Endothelial cell of umbilical vein (primary cell): ENCODE measurements at regions of chr1 and their contacts with region 1.

Region 1: DNA sequence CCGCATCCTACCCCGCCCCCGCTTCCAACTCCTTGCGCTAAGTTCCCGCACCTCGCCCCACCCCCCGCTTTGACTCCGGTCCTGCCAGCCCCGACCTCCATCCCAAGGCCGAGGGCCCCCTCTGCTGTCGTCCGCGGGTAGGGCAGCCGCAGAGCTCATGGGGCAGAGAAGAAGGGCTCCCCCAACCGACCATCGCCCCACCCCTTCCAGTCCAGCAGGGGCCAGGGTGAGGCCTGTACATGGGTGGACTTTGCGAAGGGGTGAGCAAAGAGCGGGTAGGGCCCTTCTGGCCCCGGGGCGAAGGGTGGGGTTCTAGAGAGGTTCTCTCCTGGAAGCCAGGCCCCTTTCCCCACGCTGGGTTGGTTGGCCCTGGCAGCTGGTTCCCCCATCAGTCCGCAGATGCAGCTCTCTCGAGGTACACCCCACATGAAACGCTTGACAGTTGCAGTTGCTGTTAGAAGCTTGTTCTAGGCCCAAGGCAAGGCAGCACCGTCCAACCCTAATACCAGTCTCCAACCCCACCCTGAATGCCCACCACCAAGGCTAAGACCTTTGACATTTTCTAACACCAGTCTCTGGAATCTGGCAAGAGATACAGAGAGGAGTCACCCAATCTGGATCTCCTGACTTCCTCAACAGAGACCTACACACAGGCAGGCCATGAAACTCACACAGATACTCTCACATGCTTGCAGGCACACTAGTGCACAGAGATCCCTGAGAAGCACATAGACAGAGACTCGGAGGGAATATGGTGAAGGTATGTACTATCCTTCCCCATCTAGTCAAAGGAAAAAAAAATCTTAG is 25.3 kb upstream of the ADGRB2 start:
- DNase-seq: peak; percentile 91
- H3K4me3 ChIP-seq: peak overlapping the region; percentile 4 to 78 (median 55)
- H3K27ac ChIP-seq: no peak overlapping the region
- H3K4me1 ChIP-seq: peaks cover 4% of the 10 kb centered on the region
- H3K27me3 ChIP-seq: no peaks in the 10 kb centered on the region
- CTCF ChIP-seq: peak; percentile 70 to 93
- POLR2A ChIP-seq: peak; percentile 32

Region 2: DNA sequence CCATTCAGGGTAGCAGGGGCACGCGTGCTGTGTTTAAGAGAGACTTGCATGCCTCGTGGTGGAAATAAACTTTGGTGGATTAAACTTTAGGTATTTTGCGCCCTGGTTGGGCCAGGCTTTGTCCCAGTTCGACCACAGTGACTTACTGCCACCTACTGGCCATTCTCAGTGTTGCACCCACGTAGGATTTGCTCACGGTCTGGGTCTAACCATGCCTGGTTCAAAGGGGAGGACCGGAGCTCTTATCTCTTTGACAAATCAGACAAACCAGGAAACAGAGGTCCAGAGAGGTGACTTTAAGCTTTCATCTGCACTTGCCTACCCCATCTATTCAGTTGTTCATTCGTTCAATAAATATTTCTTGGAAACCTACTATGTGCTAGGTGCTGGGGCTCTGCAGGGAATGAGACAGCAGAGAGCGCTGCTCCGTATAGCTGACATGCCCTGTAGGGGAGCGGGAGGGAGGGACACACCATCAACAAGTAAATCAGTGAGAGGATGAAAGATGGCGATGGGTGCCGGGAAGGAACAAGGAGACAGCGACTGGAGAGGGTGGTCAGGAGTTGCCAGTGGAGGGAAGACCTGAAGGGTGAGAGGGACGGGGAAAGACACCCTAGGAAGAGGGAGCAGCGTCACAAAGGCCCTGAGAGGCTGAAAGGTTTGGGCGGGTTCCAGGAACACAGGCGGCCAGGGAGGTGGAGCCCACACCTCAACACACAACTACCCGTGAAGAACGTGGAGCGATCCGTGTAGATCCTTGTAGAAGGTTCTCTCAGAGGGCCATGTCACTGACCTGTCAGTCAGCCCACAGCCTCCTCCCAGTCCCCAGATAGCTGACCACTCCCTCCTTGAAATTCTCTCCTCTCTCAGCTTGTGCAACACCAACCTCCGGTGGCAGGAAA is 240.3 kb before region 1 on chr1:
- CTCF ChIA-PET with region 1: interaction called, 20 read pairs
- POLR2A ChIA-PET with region 1: no interaction called
- dilution Hi-C with region 1: no loop called
- intact Hi-C with region 1: loop called (anchors 1 kb)
- DNase-seq: peak; percentile 88
- H3K4me3 ChIP-seq: peak overlapping the region in 1 of 3 experiments; percentile 20
- H3K27ac ChIP-seq: peak overlapping the region; percentile 4
- H3K4me1 ChIP-seq: peaks cover 13% of the 10 kb centered on the region
- H3K27me3 ChIP-seq: no peaks in the 10 kb centered on the region
- CTCF ChIP-seq: peak; percentile 86 to 95
- POLR2A ChIP-seq: no peak

Region 3: GRCh38 chr1:31644560-31645273 is 144.7 kb before region 1 on chr1 and contains the start of gene PEF1:
- CTCF ChIA-PET with region 1: interaction called, 9 read pairs
- POLR2A ChIA-PET with region 1: no interaction called
- dilution Hi-C with region 1: no loop called
- intact Hi-C with region 1: loop called (anchors 1 kb)
- DNase-seq: peak; percentile 98
- H3K4me3 ChIP-seq: peak within 1 kb of the TSS; percentile 53 to 93 (median 68)
- H3K27ac ChIP-seq: peak within 1 kb of the TSS; percentile 90
- H3K4me1 ChIP-seq: peaks cover 22% of the 10 kb centered on the region
- H3K27me3 ChIP-seq: no peaks in the 10 kb centered on the region
- CTCF ChIP-seq: no peak
- POLR2A ChIP-seq: peak; percentile 33
- total RNA-seq, gene PEF1: 66.5 and 73.3 TPM in 2 replicates

Region 4: DNA sequence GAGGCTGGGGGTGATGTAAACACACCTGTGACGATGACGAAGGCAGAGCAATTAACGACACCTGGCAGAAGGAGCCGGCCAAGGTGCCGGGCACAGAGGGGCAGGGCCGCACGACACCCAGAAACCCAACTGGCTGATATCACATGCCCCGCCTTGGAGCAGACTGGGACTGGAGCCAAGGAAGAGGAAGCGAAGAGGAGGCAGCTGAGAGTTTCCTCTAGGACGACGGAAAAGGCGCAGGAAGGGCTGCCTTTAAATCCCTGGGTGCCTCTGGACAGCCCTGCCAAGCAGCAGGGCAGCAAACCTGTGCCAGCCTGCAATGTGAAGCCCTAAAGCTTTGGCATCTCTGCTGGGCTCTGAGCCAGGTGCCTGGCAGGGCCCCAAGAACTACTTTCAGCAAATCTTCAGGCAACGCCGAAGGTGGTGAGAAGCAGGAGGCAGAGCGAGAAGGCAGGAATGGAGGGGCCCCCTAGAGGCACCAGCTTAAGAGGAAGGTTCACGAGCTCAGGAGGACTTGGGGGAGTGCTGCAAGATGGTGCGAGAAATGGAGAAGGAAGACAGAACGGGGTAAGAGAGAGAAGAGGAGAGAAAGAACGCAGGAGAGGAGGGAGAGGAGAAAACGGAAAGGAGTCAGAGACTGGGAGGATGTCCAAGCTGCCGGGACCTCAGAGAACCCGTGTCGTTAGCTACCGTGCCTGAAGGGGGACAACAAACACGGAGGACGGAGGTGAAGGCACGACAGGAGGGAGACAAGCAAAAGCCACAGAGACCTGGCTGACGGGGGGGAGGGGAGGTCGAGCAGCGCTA is 119.5 kb before region 1 on chr1:
- CTCF ChIA-PET with region 1: interaction called, 76 read pairs
- POLR2A ChIA-PET with region 1: no interaction called
- dilution Hi-C with region 1: no loop called
- intact Hi-C with region 1: no loop called
- DNase-seq: peak; percentile 77
- H3K4me3 ChIP-seq: peak overlapping the region; percentile 7 to 31 (median 21)
- H3K27ac ChIP-seq: no peak overlapping the region
- H3K4me1 ChIP-seq: peaks cover 13% of the 10 kb centered on the region
- H3K27me3 ChIP-seq: no peaks in the 10 kb centered on the region
- CTCF ChIP-seq: peak; percentile 10 to 29
- POLR2A ChIP-seq: no peak

Region 5: GRCh38 chr1:31725777-31726535 is 63.5 kb before region 1 on chr1:
- CTCF ChIA-PET with region 1: no interaction called
- POLR2A ChIA-PET with region 1: no interaction called
- dilution Hi-C with region 1: no loop called
- intact Hi-C with region 1: no loop called
- DNase-seq: no peak
- H3K4me3 ChIP-seq: no peak overlapping the region
- H3K27ac ChIP-seq: no peak overlapping the region
- H3K4me1 ChIP-seq: no peaks in the 10 kb centered on the region
- H3K27me3 ChIP-seq: no peaks in the 10 kb centered on the region
- CTCF ChIP-seq: no peak
- POLR2A ChIP-seq: no peak

Region 6: GRCh38 chr1:31745096-31745945 is 44.1 kb before region 1 on chr1:
- CTCF ChIA-PET with region 1: interaction called, 43 read pairs
- POLR2A ChIA-PET with region 1: no interaction called
- dilution Hi-C with region 1: no loop called
- intact Hi-C with region 1: loop called (anchors 1 kb)
- DNase-seq: peak; percentile 55
- H3K4me3 ChIP-seq: no peak overlapping the region
- H3K27ac ChIP-seq: no peak overlapping the region
- H3K4me1 ChIP-seq: no peaks in the 10 kb centered on the region
- H3K27me3 ChIP-seq: peaks cover 0 to 4% of the 10 kb centered on the region in 2 experiments
- CTCF ChIP-seq: peak; percentile 77 to 92
- POLR2A ChIP-seq: no peak

Region 7: DNA sequence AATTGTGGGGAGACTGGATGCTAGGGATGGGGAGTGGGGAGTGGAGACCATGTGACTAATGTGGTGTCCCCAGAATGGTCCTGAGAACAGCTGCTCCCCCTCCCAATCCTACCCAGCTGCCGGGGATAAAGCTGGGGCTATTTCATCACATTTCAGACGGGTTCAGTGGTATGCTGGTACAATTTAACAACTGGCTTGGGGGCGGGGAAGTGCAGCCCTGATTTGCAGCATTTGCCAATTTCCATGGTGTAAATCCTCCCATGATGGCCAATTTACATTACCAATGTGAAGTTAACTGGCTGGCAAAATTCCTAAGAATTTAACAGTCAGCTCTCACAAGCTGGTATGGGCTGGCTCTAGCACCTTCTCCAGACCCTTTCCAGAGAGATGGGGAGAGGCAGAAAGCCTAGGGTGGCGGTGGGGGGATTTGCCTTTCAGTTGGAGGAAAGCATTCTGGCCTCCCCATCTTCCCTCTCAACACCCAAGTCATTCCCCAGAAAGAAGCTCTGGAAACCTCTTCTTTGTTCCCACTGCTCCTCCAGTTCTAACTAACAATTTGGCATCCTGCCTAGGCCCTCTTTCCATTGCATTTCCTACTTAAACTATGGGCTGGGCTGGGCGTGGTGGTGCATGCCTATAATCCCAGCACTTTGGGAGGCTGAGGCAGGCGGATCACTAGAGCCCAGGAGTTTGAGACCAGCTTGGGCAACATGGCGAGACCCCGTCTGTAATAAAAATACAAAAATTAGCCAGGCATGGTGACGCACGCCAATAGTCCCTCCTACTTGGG is 14.1 kb before region 1 on chr1:
- CTCF ChIA-PET with region 1: interaction called, 13 read pairs
- POLR2A ChIA-PET with region 1: no interaction called
- dilution Hi-C with region 1: no loop called
- intact Hi-C with region 1: no loop called
- DNase-seq: no peak
- H3K4me3 ChIP-seq: no peak overlapping the region
- H3K27ac ChIP-seq: no peak overlapping the region
- H3K4me1 ChIP-seq: peaks cover 3% of the 10 kb centered on the region
- H3K27me3 ChIP-seq: peaks cover 41 to 45% of the 10 kb centered on the region in 2 experiments
- CTCF ChIP-seq: no peak
- POLR2A ChIP-seq: no peak